PC-3 (cell line): ENCODE measurements at regions of chr1 and their contacts with region 1.

Region 1: DNA sequence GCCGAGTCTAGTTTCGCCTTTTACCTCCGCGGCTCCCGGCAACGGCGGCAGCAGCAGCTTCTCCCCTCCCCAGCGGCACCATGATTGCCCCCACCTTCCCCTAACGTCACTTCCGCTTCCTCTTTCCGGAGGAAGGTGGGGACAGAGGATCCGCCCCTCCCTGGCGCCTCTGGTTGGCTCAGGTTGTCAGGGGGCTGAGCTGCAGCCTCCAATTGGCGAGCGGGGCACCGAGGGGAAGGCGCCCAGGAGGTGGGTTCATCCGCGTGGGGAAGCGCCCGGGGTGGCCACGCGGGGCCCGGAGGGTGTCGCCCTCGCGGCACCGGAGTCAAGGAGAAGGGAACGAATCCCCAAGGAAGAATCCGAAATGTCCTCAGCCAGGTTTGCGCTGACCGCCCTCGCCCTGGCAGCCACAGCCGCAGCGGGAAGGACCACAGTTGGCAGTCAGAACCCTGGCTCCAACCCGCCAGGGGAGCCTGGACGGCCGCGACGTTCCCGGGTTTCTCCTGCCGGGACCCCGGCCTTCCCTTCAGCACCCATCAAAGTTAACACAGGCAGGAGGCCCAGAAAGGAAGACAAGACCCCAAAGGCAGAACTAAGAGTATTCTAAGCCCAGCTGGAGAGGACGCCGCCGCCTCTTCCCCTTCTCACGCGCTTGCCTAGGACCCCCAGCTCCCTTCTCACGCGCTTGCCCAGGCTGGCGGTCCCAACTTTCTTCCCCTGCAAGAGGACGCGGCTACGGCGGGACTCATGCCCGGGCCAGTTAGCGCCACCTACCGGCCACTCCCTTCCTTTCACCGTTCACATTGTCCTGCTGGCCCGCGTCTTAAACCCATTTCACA is at the start of gene MTF1:
- DNase-seq: peak; percentile 97
- ATAC-seq: peak; percentile 93
- H3K4me3 ChIP-seq: peak within 1 kb of the TSS; percentile 92
- H3K27ac ChIP-seq: peak within 1 kb of the TSS; percentile 90
- H3K4me1 ChIP-seq: peaks cover 35% of the 10 kb centered on the region
- H3K27me3 ChIP-seq: no peaks in the 10 kb centered on the region
- CTCF ChIP-seq: peak; percentile 91
- total RNA-seq, gene MTF1: 5.4 and 10.7 TPM in 2 replicates

Region 2: DNA sequence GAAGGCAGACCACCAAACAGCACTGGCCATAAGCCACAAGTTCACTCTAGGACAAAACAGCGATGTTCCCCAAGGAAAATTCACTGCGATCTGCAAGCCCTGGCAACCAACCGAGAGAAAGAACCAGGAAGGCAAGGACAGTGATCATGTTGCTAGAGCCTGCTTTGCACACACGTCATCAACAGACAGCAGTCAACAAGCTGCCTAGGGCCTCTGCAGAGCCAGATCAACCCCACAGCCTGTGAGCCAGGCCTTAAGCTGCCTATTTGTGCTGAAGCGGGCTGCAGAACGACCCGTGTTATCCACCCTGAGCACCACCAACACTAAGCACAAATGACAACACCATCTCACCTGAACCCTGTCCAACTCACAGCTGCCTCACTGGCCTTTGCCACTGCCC is 45.5 kb before region 1 on chr1:
- CTCF ChIA-PET with region 1: interaction called, 13 read pairs
- POLR2A ChIA-PET with region 1: no interaction called
- intact Hi-C with region 1: loop called (anchors 1 kb)
- DNase-seq: no peak
- ATAC-seq: no peak
- H3K4me3 ChIP-seq: no peak overlapping the region
- H3K27ac ChIP-seq: no peak overlapping the region
- H3K4me1 ChIP-seq: peaks cover 16% of the 10 kb centered on the region
- H3K27me3 ChIP-seq: no peaks in the 10 kb centered on the region
- CTCF ChIP-seq: no peak

Region 3: GRCh38 chr1:37875834-37876233 is 16.1 kb after region 1 on chr1:
- CTCF ChIA-PET with region 1: interaction called, 11 read pairs
- POLR2A ChIA-PET with region 1: no interaction called
- intact Hi-C with region 1: no loop called
- DNase-seq: peak; percentile 42
- ATAC-seq: peak; percentile 73
- H3K4me3 ChIP-seq: no peak overlapping the region
- H3K27ac ChIP-seq: no peak overlapping the region
- H3K4me1 ChIP-seq: no peaks in the 10 kb centered on the region
- H3K27me3 ChIP-seq: no peaks in the 10 kb centered on the region
- CTCF ChIP-seq: peak; percentile 52

Region 4: GRCh38 chr1:37901191-37901892 is 41.6 kb after region 1 on chr1:
- CTCF ChIA-PET with region 1: no interaction called
- POLR2A ChIA-PET with region 1: no interaction called
- intact Hi-C with region 1: no loop called
- DNase-seq: no peak
- ATAC-seq: no peak
- H3K4me3 ChIP-seq: no peak overlapping the region
- H3K27ac ChIP-seq: no peak overlapping the region
- H3K4me1 ChIP-seq: no peaks in the 10 kb centered on the region
- H3K27me3 ChIP-seq: no peaks in the 10 kb centered on the region
- CTCF ChIP-seq: no peak